Activated T-helper 2 cell treated with anti-CD3 and anti-CD28 coated beads, Interferon-gamma antibody, Interleukin-2, Interleukin-4, amounts not matched to agents 10 μg/mL and 5 μg/mL and 100 μg/mL, durations not matched to agents 14 hours and 24 hours and 36 hours (primary cell): ENCODE measurements at regions of chr3 and their contacts with region 1.

Region 1: GRCh38 chr3:45507820-45508317 is 86.7 kb upstream of the LIMD1 start:
- DNase-seq: no peak
- H3K4me3 Mint-ChIP-seq: no peak overlapping the region
- H3K27ac Mint-ChIP-seq: no peak overlapping the region
- H3K4me1 Mint-ChIP-seq: peaks cover 8% of the 10 kb centered on the region
- H3K27me3 Mint-ChIP-seq: no peaks in the 10 kb centered on the region

Region 2: DNA sequence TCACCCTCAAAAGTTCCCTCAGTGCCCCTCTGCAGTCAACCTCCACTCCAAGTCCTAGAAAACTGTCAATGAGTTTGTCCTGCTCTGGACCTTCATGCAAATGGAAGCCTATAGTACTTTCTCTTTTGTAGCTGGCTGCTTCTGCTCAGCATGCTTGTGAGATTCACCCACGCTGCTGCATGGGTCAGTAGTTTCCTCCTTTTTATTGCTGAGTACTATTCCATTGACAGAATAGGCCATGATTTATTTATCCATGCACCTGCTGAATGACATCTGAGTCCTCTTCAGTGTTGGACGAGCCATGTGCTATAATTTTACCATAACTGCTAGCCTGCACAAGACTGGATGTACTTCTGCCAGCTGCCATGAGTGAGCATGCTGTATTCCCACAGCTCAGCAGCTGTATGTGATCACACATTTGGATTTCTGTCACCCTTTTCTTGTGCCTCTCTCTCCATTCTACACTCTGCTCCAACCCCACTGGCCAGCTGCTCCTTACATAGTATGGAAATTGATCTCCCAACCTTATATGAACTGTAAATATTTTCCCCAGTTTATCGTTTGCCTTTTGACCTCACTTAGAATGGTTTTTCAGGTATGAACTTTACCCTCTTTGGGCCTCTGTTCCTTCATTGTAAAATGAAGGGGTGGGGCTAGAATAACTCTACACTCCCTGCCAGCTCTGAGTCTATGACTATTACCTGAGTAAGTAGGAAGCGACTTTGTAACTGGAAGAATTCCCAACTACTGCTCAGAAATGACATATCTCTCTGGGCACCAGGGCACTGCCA is 387.9 kb before region 1 on chr3:
- intact Hi-C with region 1: loop called (anchors 5 kb)
- DNase-seq: no peak
- H3K4me3 Mint-ChIP-seq: no peak overlapping the region
- H3K27ac Mint-ChIP-seq: peak overlapping the region; percentile 18
- H3K4me1 Mint-ChIP-seq: peaks cover 65% of the 10 kb centered on the region
- H3K27me3 Mint-ChIP-seq: no peaks in the 10 kb centered on the region

Region 3: DNA sequence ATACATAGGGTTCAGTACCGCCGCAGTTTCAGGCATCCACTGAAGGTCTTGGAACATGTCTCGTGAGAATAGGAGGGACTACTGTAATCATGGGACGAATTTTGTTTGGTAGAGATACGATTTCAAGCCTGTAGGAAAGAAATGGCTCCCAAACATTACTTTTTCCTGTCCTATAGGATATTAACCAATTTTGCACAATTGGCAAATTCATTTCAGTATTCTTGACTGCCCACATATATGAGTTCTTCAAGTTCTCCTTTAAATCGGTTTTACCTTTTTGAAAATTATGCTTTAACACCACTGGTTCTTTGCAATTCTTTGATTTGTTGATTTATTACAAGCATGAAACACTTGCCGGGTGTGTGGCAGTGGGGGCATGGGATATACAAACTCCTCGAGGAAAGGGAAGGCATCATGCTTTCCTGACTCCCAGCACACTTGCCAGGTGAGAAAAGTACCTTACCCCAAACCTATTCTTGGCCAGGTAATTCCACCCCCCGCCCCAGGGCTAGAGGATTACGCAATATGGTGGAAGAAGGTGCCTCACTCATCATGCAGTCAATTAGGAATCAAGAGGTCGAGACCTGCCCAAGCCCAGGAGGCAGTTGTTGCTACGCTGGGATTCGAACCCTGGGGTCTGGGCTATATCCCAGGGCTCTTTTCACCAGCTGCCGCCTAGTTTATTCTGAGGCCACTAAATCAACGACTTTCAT is 120.1 kb before region 1 on chr3:
- intact Hi-C with region 1: no loop called
- DNase-seq: no peak
- H3K4me3 Mint-ChIP-seq: peak overlapping the region; percentile 98
- H3K27ac Mint-ChIP-seq: no peak overlapping the region
- H3K4me1 Mint-ChIP-seq: peaks cover 13% of the 10 kb centered on the region
- H3K27me3 Mint-ChIP-seq: peaks cover 16% of the 10 kb centered on the region

Region 4: GRCh38 chr3:45437383-45437782 is 70.5 kb before region 1 on chr3:
- intact Hi-C with region 1: no loop called
- DNase-seq: no peak
- H3K4me3 Mint-ChIP-seq: no peak overlapping the region
- H3K27ac Mint-ChIP-seq: no peak overlapping the region
- H3K4me1 Mint-ChIP-seq: peaks cover 1% of the 10 kb centered on the region
- H3K27me3 Mint-ChIP-seq: no peaks in the 10 kb centered on the region

Region 5: DNA sequence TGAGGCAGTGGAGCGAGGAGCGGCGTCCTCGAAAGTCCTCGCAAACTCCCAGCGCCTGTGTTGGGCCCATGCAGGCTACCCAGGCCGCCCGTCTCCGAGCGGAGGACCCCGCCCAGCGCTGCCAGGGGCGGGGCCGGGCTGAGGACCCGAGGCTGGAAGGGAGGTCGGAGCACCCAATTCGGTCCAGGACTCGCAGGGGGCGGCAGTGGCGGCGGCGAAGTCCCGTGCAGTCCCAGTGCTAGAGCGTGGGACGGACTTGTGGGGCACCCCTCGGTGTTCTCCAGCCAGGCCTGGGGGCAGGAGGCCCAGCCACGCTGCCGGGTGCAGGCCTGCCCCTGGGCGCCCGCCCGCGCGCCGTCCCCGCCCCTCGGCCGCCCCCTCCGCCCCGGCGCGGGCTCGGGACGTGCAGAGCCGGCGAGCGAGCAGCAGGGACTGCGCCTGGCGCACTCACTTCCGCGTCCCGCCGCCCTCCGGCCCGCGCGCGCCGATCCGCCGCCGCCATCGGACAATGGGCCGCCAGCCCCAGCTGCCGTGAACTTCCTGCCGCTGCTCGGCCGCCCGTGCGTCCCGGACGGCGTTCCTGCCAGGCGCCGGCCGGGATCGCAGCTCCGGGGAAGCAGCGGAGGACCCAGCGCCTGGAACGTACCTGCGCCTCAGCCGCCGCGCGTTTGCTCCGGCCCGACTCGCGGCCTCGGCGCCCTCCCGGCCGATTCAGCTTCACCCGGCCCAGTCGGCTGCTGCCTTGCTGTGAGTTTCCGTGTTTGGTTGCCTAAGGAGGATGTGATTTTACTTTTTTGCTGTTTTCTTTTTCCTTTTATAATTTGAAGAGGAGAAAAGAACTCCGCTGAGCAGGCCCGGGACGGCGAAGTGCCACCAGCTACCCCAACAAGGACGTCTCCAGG is 86.1 kb after region 1 on chr3:
- intact Hi-C with region 1: loop called (anchors 5 kb)
- DNase-seq: peak; percentile 74
- H3K4me3 Mint-ChIP-seq: peak overlapping the region; percentile 92
- H3K27ac Mint-ChIP-seq: peak overlapping the region; percentile 84
- H3K4me1 Mint-ChIP-seq: peaks cover 49% of the 10 kb centered on the region
- H3K27me3 Mint-ChIP-seq: peaks cover 6% of the 10 kb centered on the region

Region 6: GRCh38 chr3:45665101-45665572 is 157.3 kb after region 1 on chr3:
- intact Hi-C with region 1: loop called (anchors 1 kb)
- DNase-seq: peak; percentile 37
- H3K4me3 Mint-ChIP-seq: peak overlapping the region; percentile 76
- H3K27ac Mint-ChIP-seq: peak overlapping the region; percentile 88
- H3K4me1 Mint-ChIP-seq: peaks cover 47% of the 10 kb centered on the region
- H3K27me3 Mint-ChIP-seq: no peaks in the 10 kb centered on the region